Naive thymus-derived CD4-positive, alpha-beta T cell (primary cell): ENCODE measurements at regions of chr17 and their contacts with region 1.

Region 1: DNA sequence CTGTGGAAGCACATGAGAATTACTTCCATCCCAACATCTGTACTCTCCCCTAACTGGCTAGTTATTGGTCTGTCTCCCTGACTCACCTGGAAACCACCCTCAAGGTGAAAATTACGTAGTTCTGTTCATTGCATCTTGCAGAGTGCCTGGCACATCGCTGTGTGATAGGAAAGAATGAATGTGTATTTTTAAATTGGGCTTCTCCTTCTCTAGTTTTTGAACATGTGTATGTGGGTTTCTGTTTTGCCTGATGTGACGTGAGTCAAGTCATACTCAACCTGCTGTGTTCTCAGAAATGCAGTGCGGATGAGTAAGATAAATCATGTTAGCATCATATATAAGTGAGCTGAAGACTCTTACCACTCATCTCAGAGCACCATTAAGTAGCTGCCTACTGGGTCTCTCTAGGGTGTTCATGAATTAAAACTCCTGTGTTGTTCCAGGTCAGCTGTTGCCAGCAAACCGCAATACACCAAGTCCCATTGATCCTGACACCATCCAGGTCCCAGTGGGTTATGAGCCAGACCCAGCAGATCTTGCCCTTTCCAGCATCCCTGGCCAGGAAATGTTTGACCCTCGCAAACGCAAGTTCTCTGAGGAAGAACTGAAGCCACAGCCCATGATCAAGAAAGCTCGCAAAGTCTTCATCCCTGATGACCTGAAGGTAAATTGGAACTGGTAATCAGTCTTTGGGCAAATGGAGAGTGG is 50.2 kb downstream of the HLF start:
- DNase-seq: no peak
- ATAC-seq: no peak
- H3K4me3 ChIP-seq: no peak overlapping the region
- H3K4me3 Mint-ChIP-seq: peak overlapping the region in 1 of 10 donors; percentile 18
- H3K27ac ChIP-seq: no peak overlapping the region
- H3K27ac Mint-ChIP-seq: peak overlapping the region in 1 of 9 donors; percentile 67
- H3K4me1 ChIP-seq: no peaks in the 10 kb centered on the region
- H3K4me1 Mint-ChIP-seq: peaks cover 0 to 22% (median 0%) of the 10 kb centered on the region in 7 donors
- H3K27me3 ChIP-seq: no peaks in the 10 kb centered on the region
- H3K27me3 Mint-ChIP-seq: peaks cover 0 to 9% (median 2%) of the 10 kb centered on the region in 5 donors

Region 2: GRCh38 chr17:55303701-55304145 is 11.2 kb before region 1 on chr17:
- CTCF ChIA-PET with region 1: no interaction called
- POLR2A ChIA-PET with region 1: no interaction called
- intact Hi-C with region 1: no loop called
- DNase-seq: no peak
- ATAC-seq: no peak
- H3K4me3 ChIP-seq: no peak overlapping the region
- H3K4me3 Mint-ChIP-seq: no peak overlapping the region
- H3K27ac ChIP-seq: no peak overlapping the region
- H3K27ac Mint-ChIP-seq: no peak overlapping the region
- H3K4me1 ChIP-seq: no peaks in the 10 kb centered on the region
- H3K4me1 Mint-ChIP-seq: peaks cover 0 to 1% (median 0%) of the 10 kb centered on the region in 7 donors
- H3K27me3 ChIP-seq: no peaks in the 10 kb centered on the region
- H3K27me3 Mint-ChIP-seq: peaks cover 6 to 17% (median 7%) of the 10 kb centered on the region in 5 donors

Region 3: DNA sequence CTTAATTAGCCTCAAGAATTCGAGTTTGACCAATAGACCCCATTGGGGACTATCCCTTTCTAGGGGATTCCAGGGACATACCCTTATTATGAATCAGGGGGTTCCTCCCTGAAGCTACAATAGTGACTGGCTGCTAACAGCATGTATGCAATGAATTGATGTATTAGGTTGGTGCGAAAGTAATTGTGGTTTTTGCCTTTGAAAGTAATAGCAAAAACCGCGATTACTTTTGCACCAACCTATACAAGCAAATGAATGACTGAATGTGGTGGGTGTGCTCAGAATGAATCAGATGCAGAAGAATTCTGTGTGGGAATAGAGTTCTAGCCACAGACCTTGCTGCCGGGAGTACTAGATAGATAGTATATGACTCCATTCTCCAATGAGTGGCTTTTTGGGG is 26.5 kb after region 1 on chr17:
- CTCF ChIA-PET with region 1: no interaction called
- POLR2A ChIA-PET with region 1: no interaction called
- intact Hi-C with region 1: loop called in 1 of 2 experiments (anchors 1 kb)
- DNase-seq: no peak
- ATAC-seq: no peak
- H3K4me3 ChIP-seq: no peak overlapping the region
- H3K4me3 Mint-ChIP-seq: no peak overlapping the region
- H3K27ac ChIP-seq: no peak overlapping the region
- H3K27ac Mint-ChIP-seq: no peak overlapping the region
- H3K4me1 ChIP-seq: peaks cover 0 to 27% of the 10 kb centered on the region in 2 donors
- H3K4me1 Mint-ChIP-seq: peaks cover 0 to 52% (median 12%) of the 10 kb centered on the region in 7 donors
- H3K27me3 ChIP-seq: no peaks in the 10 kb centered on the region
- H3K27me3 Mint-ChIP-seq: peaks cover 11 to 27% (median 15%) of the 10 kb centered on the region in 5 donors